PC-3 (cell line): ENCODE measurements at regions of chr2 and their contacts with region 1.

Region 1: DNA sequence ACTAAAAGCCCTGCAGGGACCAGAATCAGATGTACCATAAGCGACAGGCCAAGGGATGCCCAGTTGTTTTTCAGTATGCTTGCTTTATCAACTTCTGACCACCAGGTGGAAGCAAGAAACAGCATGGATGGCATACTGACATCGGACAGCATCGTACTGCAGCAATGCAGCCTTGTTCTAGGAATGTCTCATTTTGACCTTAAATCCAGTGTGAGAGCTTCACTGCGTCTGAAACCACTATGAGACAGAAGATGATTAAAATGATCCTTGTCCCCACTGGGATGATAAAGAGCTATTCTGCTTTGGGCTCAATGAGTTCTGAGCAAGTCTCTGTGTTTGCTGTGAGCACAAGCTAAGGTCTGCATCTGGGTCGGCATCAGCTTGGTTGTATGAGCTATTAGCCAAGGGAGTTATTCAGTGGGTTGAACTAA is 54.3 kb downstream of the CDK15 start:
- DNase-seq: peak; percentile 82
- ATAC-seq: peak; percentile 98
- H3K4me3 ChIP-seq: no peak overlapping the region
- H3K27ac ChIP-seq: no peak overlapping the region
- H3K4me1 ChIP-seq: no peaks in the 10 kb centered on the region
- H3K27me3 ChIP-seq: no peaks in the 10 kb centered on the region
- CTCF ChIP-seq: peak; percentile 88

Region 2: DNA sequence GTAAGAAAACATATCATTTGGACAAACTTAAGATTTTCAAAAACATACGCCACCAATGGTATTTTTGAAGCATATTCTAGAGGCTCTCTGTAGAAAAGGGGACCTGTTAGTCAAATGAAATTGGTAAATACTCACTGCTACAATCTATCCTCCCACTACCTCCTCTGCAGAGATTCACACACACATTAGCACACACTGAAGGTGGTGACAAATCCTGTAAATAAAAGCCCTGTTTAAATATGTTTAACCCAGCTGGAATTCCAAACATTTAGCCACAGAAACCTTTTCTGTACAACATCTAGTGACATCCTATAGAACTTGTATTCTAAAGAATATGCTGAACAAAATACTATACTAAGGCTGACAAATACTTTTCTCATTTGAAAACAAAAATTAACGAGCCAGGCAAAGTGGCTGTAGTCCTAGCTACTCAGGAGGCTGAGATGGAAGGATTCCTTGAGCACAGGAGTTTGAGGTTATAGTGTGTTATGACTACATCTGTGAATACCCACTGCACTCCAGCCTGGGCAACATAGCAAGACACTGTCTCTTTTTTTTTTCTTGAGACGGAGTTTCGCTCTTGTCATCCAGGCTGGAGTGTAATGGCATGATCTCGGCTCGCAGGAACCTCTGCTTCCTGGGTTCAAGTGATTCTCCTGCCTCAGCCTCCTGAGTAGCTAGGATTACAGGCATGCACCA is 105.8 kb before region 1 on chr2:
- CTCF ChIA-PET with region 1: no interaction called
- POLR2A ChIA-PET with region 1: no interaction called
- intact Hi-C with region 1: loop called (anchors 1 kb)
- DNase-seq: peak; percentile 72
- ATAC-seq: peak; percentile 96
- H3K4me3 ChIP-seq: no peak overlapping the region
- H3K27ac ChIP-seq: no peak overlapping the region
- H3K4me1 ChIP-seq: peaks cover 10% of the 10 kb centered on the region
- H3K27me3 ChIP-seq: no peaks in the 10 kb centered on the region
- CTCF ChIP-seq: no peak

Region 3: GRCh38 chr2:201938149-201938785 is 77.6 kb after region 1 on chr2:
- CTCF ChIA-PET with region 1: no interaction called
- POLR2A ChIA-PET with region 1: no interaction called
- intact Hi-C with region 1: no loop called
- DNase-seq: no peak
- ATAC-seq: no peak
- H3K4me3 ChIP-seq: no peak overlapping the region
- H3K27ac ChIP-seq: no peak overlapping the region
- H3K4me1 ChIP-seq: no peaks in the 10 kb centered on the region
- H3K27me3 ChIP-seq: peaks cover 6% of the 10 kb centered on the region; the same call in 1 of the 2 replicates
- CTCF ChIP-seq: no peak

Region 4: GRCh38 chr2:202056392-202057010 is 195.8 kb after region 1 on chr2:
- CTCF ChIA-PET with region 1: interaction called, 3 read pairs
- POLR2A ChIA-PET with region 1: no interaction called
- intact Hi-C with region 1: loop called (anchors 1 kb)
- DNase-seq: peak; percentile 57
- ATAC-seq: peak; percentile 77
- H3K4me3 ChIP-seq: no peak overlapping the region
- H3K27ac ChIP-seq: no peak overlapping the region
- H3K4me1 ChIP-seq: no peaks in the 10 kb centered on the region
- H3K27me3 ChIP-seq: peaks cover 18% of the 10 kb centered on the region; the same call in 1 of the 2 replicates
- CTCF ChIP-seq: peak; percentile 80

Region 5: DNA sequence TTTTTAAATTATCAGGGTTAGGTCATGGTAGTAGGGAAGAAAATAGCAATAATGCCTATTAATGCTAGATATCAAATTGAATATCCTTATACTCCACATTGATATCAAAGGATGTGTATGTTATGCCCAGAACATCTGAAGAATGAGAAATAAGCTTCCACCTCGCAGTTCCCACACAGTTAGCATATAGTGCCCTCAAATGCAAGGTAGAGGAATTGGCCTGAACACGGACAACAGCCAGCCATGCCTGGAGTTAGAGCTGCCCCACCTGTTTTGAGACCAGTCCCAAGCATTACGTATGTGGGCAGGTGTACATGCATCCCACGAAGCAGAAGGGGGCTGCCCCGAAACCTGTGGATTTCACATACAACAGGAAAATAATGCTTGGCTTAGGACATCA is 298.1 kb after region 1 on chr2:
- CTCF ChIA-PET with region 1: no interaction called
- POLR2A ChIA-PET with region 1: no interaction called
- intact Hi-C with region 1: loop called (anchors 1 kb)
- DNase-seq: peak; percentile 48
- ATAC-seq: peak; percentile 66
- H3K4me3 ChIP-seq: no peak overlapping the region
- H3K27ac ChIP-seq: no peak overlapping the region
- H3K4me1 ChIP-seq: 0 out of 2 replicates have a peak, but pooled peaks cover 3% of the 10 kb centered on the region
- H3K27me3 ChIP-seq: no peaks in the 10 kb centered on the region
- CTCF ChIP-seq: peak; percentile 52